ENCODE measurements at regions of chr2 and their contacts with region 1.

Region 1: DNA sequence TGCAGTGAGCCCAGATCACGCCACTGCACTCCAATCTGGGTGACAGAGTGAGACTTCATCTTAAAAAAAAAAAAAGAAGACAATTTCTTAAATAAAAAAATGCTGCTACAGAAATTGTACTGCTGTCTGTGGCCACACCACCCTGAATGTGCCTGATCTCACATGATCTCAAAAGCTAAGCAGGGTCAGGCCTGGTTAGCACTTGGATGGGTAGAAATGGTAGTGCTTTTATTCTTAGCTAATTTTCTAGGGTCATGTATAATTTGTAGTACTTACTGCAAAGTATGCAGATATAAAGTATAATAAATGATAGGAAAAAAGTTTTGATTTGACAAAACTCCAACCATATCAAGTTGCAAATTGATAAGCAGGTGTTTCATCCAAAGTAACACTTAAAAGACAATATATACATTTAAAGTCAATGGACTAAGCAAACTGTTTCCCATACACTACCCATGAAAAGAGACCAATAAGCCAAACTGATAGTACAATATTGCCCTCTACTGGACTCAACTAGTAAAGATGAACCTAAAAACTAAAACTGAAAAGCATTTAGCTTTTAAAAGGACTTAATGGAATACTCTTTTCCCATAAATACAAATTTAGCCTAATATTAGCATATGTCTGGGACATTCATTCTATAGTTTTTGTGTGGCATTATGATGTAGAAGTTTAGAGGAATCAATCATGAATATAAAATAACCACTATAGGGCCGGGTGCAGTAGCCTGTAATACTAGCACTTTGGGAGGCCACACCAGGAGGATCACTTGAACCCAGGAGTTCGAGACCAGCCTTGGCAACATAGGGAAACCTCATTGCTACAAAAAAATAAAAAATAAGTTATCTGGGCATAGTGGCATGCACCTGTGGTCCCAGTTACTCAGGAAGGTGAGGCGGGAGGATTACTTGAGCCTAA is 18.6 kb upstream of the PEX13 start:
- DNase-seq: peak; percentile 37
- H3K4me3 ChIP-seq: no peak overlapping the region
- H3K27ac ChIP-seq: no peak overlapping the region
- H3K4me1 ChIP-seq: no peaks in the 10 kb centered on the region
- H3K27me3 ChIP-seq: no peaks in the 10 kb centered on the region
- CTCF ChIP-seq: peak; percentile 59 to 62

Region 2: GRCh38 chr2:60560734-60561644 is 437.9 kb before region 1 on chr2:
- CTCF ChIA-PET with region 1: no interaction called
- dilution Hi-C with region 1: no loop called
- in situ Hi-C with region 1: no loop called
- intact Hi-C with region 1: loop called (anchors 5 kb)
- DNase-seq: peak; percentile 35
- H3K4me3 ChIP-seq: no peak overlapping the region
- H3K27ac ChIP-seq: no peak overlapping the region
- H3K4me1 ChIP-seq: no peaks in the 10 kb centered on the region
- H3K27me3 ChIP-seq: no peaks in the 10 kb centered on the region
- CTCF ChIP-seq: peak; percentile 41 to 58

Region 3: DNA sequence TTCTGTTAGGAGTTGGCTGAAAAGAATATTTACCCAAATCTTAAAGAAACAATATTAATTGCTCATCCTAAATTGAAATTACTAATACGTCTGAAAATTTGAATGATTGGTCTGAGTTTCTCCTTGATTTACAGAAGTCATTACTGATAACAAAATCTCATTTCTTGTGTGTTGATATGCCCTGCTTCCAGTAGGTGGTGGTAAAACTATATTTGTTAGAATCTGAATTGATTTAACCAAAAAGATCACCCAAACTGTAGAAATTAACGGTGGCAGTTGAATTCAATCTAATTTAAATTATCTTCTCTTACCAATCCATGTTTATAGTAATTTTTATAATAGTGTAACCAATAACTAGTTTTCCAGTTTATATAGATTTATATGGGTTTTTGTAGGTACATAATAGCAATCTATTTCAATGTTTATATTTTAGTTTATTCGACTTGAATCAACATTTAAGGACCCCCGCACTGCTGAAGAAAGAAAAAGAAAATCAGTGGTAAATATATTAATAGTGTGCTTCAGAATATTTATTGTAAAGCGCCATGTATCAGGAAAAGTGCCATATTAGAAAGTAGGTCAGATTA is 204.5 kb before region 1 on chr2:
- CTCF ChIA-PET with region 1: no interaction called
- dilution Hi-C with region 1: loop called (anchors 5 kb)
- in situ Hi-C with region 1: loop called in 1 of 2 experiments (anchors 5 kb)
- intact Hi-C with region 1: loop called (anchors 1 kb)
- DNase-seq: no peak
- H3K4me3 ChIP-seq: no peak overlapping the region
- H3K27ac ChIP-seq: no peak overlapping the region
- H3K4me1 ChIP-seq: no peaks in the 10 kb centered on the region
- H3K27me3 ChIP-seq: no peaks in the 10 kb centered on the region
- CTCF ChIP-seq: peak; percentile 36 to 49

Region 4: GRCh38 chr2:60818272-60818671 is 180.6 kb before region 1 on chr2:
- CTCF ChIA-PET with region 1: no interaction called
- dilution Hi-C with region 1: no loop called
- in situ Hi-C with region 1: no loop called
- intact Hi-C with region 1: loop called (anchors 1 kb)
- DNase-seq: no peak
- H3K4me3 ChIP-seq: no peak overlapping the region
- H3K27ac ChIP-seq: no peak overlapping the region
- H3K4me1 ChIP-seq: no peaks in the 10 kb centered on the region
- H3K27me3 ChIP-seq: no peaks in the 10 kb centered on the region
- CTCF ChIP-seq: peak; percentile 13 to 40

Region 5: GRCh38 chr2:60934165-60934722 is 64.6 kb before region 1 on chr2:
- CTCF ChIA-PET with region 1: no interaction called
- dilution Hi-C with region 1: loop called (anchors 5 kb)
- in situ Hi-C with region 1: no loop called
- intact Hi-C with region 1: loop called (anchors 5 kb)
- DNase-seq: no peak
- H3K4me3 ChIP-seq: no peak overlapping the region
- H3K27ac ChIP-seq: no peak overlapping the region
- H3K4me1 ChIP-seq: no peaks in the 10 kb centered on the region
- H3K27me3 ChIP-seq: no peaks in the 10 kb centered on the region
- CTCF ChIP-seq: no peak

Region 6: DNA sequence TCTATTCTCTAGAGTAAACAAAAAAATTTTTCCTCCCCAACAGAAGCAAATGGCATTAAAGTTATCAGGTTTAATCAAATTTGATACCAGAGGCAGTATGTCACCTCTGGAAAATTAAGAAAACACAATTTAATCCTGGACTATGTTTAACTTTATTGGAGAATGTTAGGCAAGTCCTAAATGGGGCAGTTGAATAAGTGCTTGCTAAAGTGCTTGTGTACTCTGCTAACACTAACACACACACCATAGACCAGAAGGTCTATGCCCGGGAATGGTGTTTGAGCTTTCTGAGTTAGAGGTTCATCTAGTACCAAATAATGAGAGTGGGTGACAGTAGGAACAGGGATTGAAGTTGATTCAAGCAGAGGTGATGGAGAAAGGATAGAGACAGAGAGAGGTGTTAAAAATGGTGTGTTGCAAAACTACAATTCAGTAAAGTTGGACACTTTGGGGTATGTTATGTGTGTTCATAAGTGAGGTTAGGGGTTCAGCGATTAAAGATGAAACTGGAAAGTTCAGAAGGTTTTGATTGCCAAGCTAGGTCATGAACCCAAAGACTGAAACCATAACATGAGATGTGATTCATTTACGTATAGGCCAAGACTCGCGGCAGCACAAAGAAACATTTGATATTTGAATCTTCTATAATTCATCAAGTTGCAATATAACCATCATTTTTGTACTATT is 21.9 kb before region 1 on chr2:
- CTCF ChIA-PET with region 1: no interaction called
- dilution Hi-C with region 1: no loop called
- in situ Hi-C with region 1: no loop called
- intact Hi-C with region 1: no loop called
- DNase-seq: no peak
- H3K4me3 ChIP-seq: no peak overlapping the region
- H3K27ac ChIP-seq: no peak overlapping the region
- H3K4me1 ChIP-seq: no peaks in the 10 kb centered on the region
- H3K27me3 ChIP-seq: no peaks in the 10 kb centered on the region
- CTCF ChIP-seq: no peak

Region 7: GRCh38 chr2:61193670-61194571 is 195.0 kb after region 1 on chr2:
- CTCF ChIA-PET with region 1: no interaction called
- dilution Hi-C with region 1: no loop called
- in situ Hi-C with region 1: no loop called
- intact Hi-C with region 1: no loop called
- DNase-seq: peak; percentile 31
- H3K4me3 ChIP-seq: no peak overlapping the region
- H3K27ac ChIP-seq: no peak overlapping the region
- H3K4me1 ChIP-seq: peaks cover 3% of the 10 kb centered on the region
- H3K27me3 ChIP-seq: no peaks in the 10 kb centered on the region
- CTCF ChIP-seq: no peak

Measured in mammary epithelial cell (primary cell).